Activated CD4-positive, alpha-beta T cell treated with anti-CD3 and anti-CD28 coated beads for 36 hours (primary cell): ENCODE measurements at regions of chr4 and their contacts with region 1.

Region 1: DNA sequence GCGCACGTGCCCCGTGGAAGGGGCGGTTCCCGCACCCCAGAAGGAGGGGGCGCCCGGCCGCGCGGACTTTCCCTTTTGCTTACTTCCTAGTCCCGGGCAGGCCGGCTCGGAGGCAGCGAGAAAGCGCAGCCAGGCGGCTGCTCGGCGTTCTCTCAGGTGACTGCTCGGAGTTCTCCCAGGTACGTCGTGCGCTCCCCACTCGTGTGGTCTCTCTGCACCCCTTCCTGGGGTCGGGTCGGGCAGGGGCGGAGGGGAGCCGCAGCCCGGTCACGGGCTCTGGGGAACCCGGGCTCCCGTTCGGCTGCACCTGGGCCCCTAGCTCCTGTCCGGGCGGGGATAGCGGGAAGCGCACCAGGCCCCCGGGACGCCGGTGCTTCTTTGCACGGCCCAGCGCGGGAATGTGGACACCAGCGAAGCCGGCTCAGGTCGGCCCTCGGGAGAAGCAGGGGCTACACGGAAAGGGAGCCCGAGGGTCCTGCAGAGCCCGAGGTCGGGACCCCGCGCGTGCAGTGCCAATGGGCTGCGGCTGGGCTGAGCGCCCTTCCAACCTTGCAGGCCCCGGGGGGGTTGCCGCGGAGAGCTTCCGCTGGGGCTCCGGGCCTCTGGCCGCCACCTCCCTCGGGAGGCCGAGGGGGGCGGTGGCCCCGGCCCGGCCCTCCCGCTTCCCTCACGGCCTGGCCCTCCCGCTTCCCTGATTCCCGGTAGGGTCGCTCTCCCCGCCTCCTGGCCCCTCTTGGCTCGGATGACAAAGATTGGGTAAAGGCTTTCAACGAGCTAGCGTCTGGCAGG is at the start of gene TLR2:
- DNase-seq: peak; percentile 83
- ATAC-seq: peak; percentile 95
- H3K4me3 Mint-ChIP-seq: peak within 1 kb of the TSS; percentile 73
- H3K27ac Mint-ChIP-seq: peak within 1 kb of the TSS; percentile 58
- H3K4me1 Mint-ChIP-seq: peaks cover 11% of the 10 kb centered on the region
- H3K27me3 Mint-ChIP-seq: peaks cover 21% of the 10 kb centered on the region
- total RNA-seq, gene TLR2: 1.3 to 2.0 TPM

Region 2: DNA sequence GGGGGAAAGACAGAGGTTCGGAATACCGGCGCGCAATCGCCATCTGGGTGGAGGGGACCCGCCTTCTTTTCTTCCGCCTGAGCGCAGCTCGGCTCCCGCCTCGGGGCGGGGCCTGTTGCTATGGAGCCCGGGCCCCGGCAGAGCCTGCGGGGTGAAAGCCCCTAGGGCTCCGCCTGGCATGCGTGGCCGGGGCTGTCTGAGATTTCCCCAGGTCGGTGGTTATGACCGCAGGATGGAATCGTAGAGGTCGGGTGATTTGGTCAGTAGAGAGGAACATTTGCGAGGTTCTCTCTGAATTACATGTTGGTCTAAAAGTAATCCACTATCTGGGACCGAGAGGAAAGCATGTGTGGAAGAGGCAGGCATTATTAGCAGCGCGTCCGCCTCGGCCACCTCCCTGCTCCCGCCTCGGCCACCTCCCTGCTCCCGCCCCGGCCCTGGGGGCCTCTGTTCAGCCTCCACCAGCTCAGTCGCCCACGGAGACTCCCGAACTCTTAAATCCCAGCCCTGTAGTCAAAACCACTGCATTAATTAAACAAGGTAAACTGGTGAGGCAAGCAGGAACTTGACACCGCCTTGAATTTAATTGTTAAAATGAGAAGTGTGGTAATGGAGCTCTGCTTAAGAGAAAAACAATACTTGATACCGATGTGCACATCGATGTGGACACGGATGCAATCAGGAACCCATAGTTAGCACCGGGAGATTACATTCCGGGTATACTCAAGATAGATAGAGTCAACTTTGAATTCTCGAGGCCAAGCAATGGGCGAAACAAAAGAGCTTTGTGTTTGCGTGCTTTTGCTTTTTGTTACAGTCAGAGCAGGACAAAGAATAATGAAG is 435.0 kb before region 1 on chr4:
- CTCF ChIA-PET with region 1: no interaction called
- POLR2A ChIA-PET with region 1: no interaction called
- intact Hi-C with region 1: no loop called
- DNase-seq: peak; percentile 91
- ATAC-seq: peak; percentile 98
- H3K4me3 Mint-ChIP-seq: peak overlapping the region; percentile 71
- H3K27ac Mint-ChIP-seq: peak overlapping the region; percentile 63
- H3K4me1 Mint-ChIP-seq: peaks cover 11% of the 10 kb centered on the region
- H3K27me3 Mint-ChIP-seq: no peaks in the 10 kb centered on the region

Region 3: DNA sequence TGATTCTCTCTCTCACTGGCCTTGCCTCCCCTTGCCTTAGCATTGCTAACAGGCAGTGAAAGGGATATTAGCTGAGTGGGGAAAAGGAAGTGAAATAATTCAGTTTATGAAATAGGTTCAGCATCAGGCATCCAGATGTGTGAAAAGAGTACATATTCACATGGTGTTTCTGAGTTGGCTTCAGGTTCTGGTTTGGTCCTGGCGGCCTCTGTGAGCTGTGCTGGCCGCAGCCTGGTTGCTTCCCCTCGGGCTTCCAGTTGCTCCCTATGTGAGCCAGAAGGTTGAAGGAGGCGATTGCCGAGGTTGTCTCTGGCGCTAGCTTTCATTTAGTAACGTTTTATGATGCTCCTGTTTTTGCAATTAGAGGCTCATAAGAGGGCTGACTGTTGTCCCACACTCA is 99.3 kb before region 1 on chr4:
- CTCF ChIA-PET with region 1: no interaction called
- POLR2A ChIA-PET with region 1: no interaction called
- intact Hi-C with region 1: no loop called
- DNase-seq: no peak
- ATAC-seq: no peak
- H3K4me3 Mint-ChIP-seq: no peak overlapping the region
- H3K27ac Mint-ChIP-seq: peak overlapping the region; percentile 62
- H3K4me1 Mint-ChIP-seq: peaks cover 26% of the 10 kb centered on the region
- H3K27me3 Mint-ChIP-seq: no peaks in the 10 kb centered on the region

Region 4: GRCh38 chr4:153649572-153649991 is 34.8 kb before region 1 on chr4:
- CTCF ChIA-PET with region 1: interaction called, 6 read pairs
- POLR2A ChIA-PET with region 1: no interaction called
- intact Hi-C with region 1: loop called in 1 of 2 experiments (anchors 2 kb)
- DNase-seq: peak; percentile 44
- ATAC-seq: peak; percentile 24
- H3K4me3 Mint-ChIP-seq: no peak overlapping the region
- H3K27ac Mint-ChIP-seq: no peak overlapping the region
- H3K4me1 Mint-ChIP-seq: peaks cover 37% of the 10 kb centered on the region
- H3K27me3 Mint-ChIP-seq: no peaks in the 10 kb centered on the region

Region 5: DNA sequence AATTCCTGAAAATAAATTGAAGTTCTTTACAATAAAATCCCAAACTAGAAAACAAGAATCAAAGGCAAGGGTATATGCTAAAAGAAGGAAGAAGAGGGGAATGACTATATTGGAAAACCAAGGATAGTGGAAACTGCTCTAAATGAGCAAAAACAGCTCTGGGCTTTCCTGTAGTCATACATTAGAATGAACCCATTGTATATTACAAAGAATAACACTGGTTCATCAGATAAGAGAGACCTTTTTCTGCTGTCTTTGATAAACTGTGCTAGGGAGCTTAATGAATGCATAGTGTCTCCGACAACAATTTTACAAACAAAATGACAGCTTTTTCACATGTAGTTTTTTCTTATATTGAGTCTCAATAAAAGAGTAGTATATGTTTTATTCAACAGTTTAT is 26.3 kb after region 1 on chr4:
- CTCF ChIA-PET with region 1: no interaction called
- POLR2A ChIA-PET with region 1: no interaction called
- intact Hi-C with region 1: no loop called
- DNase-seq: no peak
- ATAC-seq: no peak
- H3K4me3 Mint-ChIP-seq: no peak overlapping the region
- H3K27ac Mint-ChIP-seq: no peak overlapping the region
- H3K4me1 Mint-ChIP-seq: peaks cover 10% of the 10 kb centered on the region
- H3K27me3 Mint-ChIP-seq: peaks cover 2% of the 10 kb centered on the region

Region 6: GRCh38 chr4:153832720-153833287 is 148.4 kb after region 1 on chr4:
- CTCF ChIA-PET with region 1: no interaction called
- POLR2A ChIA-PET with region 1: no interaction called
- intact Hi-C with region 1: no loop called
- DNase-seq: no peak
- ATAC-seq: no peak
- H3K4me3 Mint-ChIP-seq: no peak overlapping the region
- H3K27ac Mint-ChIP-seq: no peak overlapping the region
- H3K4me1 Mint-ChIP-seq: no peaks in the 10 kb centered on the region
- H3K27me3 Mint-ChIP-seq: peaks cover 22% of the 10 kb centered on the region